Transverse colon (tissue), 4 donors: ENCODE measurements at regions of chr3 and their contacts with region 1.

Region 1: GRCh38 chr3:87771341-87772192 is 287.2 kb downstream of the CGGBP1 start:
- DNase-seq: no peak
- H3K4me3 ChIP-seq: no peak overlapping the region
- H3K27ac ChIP-seq: no peak overlapping the region
- H3K4me1 ChIP-seq: no peaks in the 10 kb centered on the region
- H3K27me3 ChIP-seq: no peaks in the 10 kb centered on the region
- CTCF ChIP-seq: peak; percentile 47 to 61 (median 55)
- EP300 ChIP-seq: no peak
- POLR2A ChIP-seq: no peak

Region 2: GRCh38 chr3:88003115-88003755 is 231.7 kb after region 1 on chr3:
- in situ Hi-C with region 1: loop called in 1 of 4 experiments (anchors 25 kb)
- intact Hi-C with region 1: no loop called
- DNase-seq: no peak
- H3K4me3 ChIP-seq: no peak overlapping the region
- H3K27ac ChIP-seq: no peak overlapping the region
- H3K4me1 ChIP-seq: no peaks in the 10 kb centered on the region
- H3K27me3 ChIP-seq: no peaks in the 10 kb centered on the region
- CTCF ChIP-seq: peak; percentile 65 to 80 (median 70)
- EP300 ChIP-seq: no peak
- POLR2A ChIP-seq: no peak

Region 3: GRCh38 chr3:88113311-88114162 is 342.0 kb after region 1 on chr3:
- in situ Hi-C with region 1: loop called in 1 of 4 experiments (anchors 25 kb)
- intact Hi-C with region 1: loop called (anchors 10 kb)
- DNase-seq: peak; percentile 53
- H3K4me3 ChIP-seq: no peak overlapping the region
- H3K27ac ChIP-seq: no peak overlapping the region
- H3K4me1 ChIP-seq: no peaks in the 10 kb centered on the region
- H3K27me3 ChIP-seq: no peaks in the 10 kb centered on the region
- CTCF ChIP-seq: peak; percentile 57 to 70 (median 67)
- EP300 ChIP-seq: no peak
- POLR2A ChIP-seq: no peak